ENCODE measurements at regions of chr4 and their contacts with region 1.

Region 1: GRCh38 chr4:33551244-33551643 is 2693.1 kb downstream of the ARAP2 start:
- DNase-seq: no peak
- ATAC-seq: no peak
- H3K4me3 ChIP-seq: no peak overlapping the region
- H3K27ac ChIP-seq: no peak overlapping the region
- H3K4me1 ChIP-seq: no peaks in the 10 kb centered on the region
- H3K27me3 ChIP-seq: no peaks in the 10 kb centered on the region
- CTCF ChIP-seq: no peak

Region 2: DNA sequence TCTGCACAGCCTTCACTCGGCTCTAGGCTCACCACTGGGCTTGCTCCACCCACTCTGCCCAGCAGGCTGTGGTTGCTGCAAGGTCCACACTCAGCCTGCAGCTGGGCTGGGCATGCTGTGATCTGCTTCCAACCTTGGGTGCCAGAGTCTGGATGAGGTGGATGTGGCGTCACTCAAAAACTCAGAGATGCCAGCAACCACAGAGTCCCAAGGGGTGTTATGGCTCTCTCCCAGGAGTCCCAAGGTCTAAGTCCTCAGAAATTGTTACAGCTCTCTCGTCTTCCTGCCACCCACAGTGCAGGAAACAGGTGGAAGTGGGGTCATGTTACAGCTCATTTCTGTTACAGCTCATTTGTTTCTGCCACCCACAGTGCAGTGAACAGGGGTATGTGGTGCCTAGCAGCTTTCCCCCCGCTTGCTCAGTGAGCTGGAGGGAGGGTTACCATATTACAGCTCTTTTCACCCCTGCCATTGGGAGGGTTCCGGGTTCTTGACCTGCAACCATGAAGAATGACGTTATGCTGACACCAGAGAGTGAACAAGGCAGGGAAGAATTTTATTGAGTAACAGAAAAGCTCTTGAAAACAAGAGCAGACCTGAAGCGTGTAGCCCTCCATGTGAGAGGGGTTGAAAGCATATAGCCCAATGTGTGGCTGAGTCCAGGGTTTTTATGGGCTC is 1937.2 kb before region 1 on chr4:
- intact Hi-C with region 1: loop called in 1 of 10 experiments (anchors 5 kb)
- DNase-seq: no peak
- ATAC-seq: no peak
- H3K4me3 ChIP-seq: no peak overlapping the region
- H3K27ac ChIP-seq: no peak overlapping the region
- H3K4me1 ChIP-seq: no peaks in the 10 kb centered on the region
- H3K27me3 ChIP-seq: no peaks in the 10 kb centered on the region
- CTCF ChIP-seq: no peak

Measured in heart right ventricle (tissue), 16 donors.